ENCODE measurements at regions of chr2 and their contacts with region 1.

Region 1: GRCh38 chr2:130342533-130343275 is at the start of gene IMP4:
- DNase-seq: peak; percentile 99
- H3K4me3 Mint-ChIP-seq: peak within 1 kb of the TSS; percentile 98
- H3K27ac Mint-ChIP-seq: peak within 1 kb of the TSS; percentile 98
- H3K4me1 Mint-ChIP-seq: peaks cover 12% of the 10 kb centered on the region
- H3K27me3 Mint-ChIP-seq: no peaks in the 10 kb centered on the region
- CTCF ChIP-seq: no peak
- total RNA-seq, gene IMP4: 99.8 and 144 TPM in 2 replicates

Region 2: DNA sequence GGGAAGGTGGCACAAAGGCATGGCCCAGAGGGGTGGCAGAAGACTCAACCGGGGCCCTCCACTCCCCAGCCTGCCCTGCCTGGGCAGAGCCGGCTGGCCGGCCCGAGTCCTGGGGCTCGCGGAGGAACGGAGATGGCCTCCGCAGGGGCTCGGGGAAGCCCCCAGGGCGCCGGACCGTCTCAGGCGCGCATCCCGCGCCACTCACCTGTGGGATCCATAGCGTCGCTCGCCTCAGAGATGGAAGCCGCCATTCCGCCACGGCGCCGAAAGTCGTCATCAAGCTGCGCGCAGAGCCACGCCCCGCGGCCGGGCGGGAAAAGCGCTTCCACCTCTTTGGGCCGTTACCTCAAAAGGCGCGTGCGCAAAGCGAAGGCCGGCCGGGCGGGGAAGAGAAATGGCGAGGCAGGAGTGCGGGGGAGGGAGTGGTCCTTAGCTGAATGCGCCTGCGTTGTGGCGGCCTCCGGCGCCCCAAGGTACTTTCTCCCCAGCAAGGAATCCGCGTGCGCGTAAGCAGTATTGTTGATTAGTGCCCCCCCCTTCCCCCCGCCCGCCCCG is 161.3 kb before region 1 on chr2 and contains the start of gene SMPD4:
- CTCF ChIA-PET with region 1: interaction called, 90 read pairs
- POLR2A ChIA-PET with region 1: interaction called, 61 read pairs
- intact Hi-C with region 1: no loop called
- DNase-seq: peak; percentile 96
- H3K4me3 Mint-ChIP-seq: peak within 1 kb of the TSS; percentile 85
- H3K27ac Mint-ChIP-seq: peak within 1 kb of the TSS; percentile 92
- H3K4me1 Mint-ChIP-seq: peaks cover 5% of the 10 kb centered on the region
- H3K27me3 Mint-ChIP-seq: no peaks in the 10 kb centered on the region
- CTCF ChIP-seq: no peak
- total RNA-seq, gene SMPD4: 40.2 and 41.1 TPM in 2 replicates

Region 3: DNA sequence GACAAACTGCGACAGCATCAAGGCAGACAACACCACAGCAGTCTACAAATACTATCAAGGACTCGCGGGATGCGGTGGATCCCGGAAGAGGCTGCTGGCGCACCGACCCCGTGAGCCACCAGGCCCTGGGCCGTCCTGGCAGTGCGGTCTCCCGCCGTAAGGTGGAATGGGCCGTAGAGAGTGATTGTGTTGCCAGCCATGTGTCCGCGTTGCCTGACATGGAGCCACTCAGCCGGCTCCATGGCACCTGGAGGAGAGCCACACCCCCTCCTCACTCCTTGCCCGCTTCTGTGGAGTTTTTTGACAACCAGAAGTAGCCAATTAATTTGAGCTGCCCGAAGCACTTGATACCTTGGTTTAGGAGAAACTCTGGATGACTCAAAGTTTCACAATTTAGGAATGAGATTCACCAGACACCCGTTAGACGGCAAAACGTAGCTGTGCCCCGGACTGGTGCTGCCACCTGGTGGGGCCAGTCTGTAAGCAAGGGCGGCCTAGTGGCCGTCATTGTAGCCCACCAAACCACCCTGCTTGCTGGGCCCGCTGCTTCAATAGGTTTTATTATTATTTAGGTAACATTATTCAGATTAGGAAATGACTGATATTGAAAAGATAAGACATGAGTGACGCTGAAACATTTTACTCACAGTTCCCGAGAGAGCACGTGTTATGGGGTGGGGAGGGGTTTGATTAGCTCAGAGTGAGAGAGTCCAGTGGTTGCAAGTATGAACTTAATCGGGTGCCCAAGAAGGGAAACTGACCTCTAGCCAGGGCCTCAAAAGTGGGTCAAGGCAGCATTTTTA is 10.2 kb before region 1 on chr2:
- CTCF ChIA-PET with region 1: interaction called, 37 read pairs
- POLR2A ChIA-PET with region 1: interaction called, 39 read pairs
- intact Hi-C with region 1: no loop called
- DNase-seq: peak; percentile 84
- H3K4me3 Mint-ChIP-seq: no peak overlapping the region
- H3K27ac Mint-ChIP-seq: no peak overlapping the region
- H3K4me1 Mint-ChIP-seq: peaks cover 15% of the 10 kb centered on the region
- H3K27me3 Mint-ChIP-seq: no peaks in the 10 kb centered on the region
- CTCF ChIP-seq: peak; percentile 95

Region 4: GRCh38 chr2:130355578-130356431 is 13.1 kb after region 1 on chr2 and contains the start of gene PTPN18:
- CTCF ChIA-PET with region 1: interaction called, 6 read pairs
- POLR2A ChIA-PET with region 1: interaction called, 53 read pairs
- intact Hi-C with region 1: no loop called
- DNase-seq: peak; percentile 85
- H3K4me3 Mint-ChIP-seq: peak within 1 kb of the TSS; percentile 78
- H3K27ac Mint-ChIP-seq: peak within 1 kb of the TSS; percentile 12
- H3K4me1 Mint-ChIP-seq: peaks cover 17% of the 10 kb centered on the region
- H3K27me3 Mint-ChIP-seq: no peaks in the 10 kb centered on the region
- CTCF ChIP-seq: peak; percentile 30
- total RNA-seq, gene PTPN18: 34.4 and 43.1 TPM in 2 replicates

Region 5: GRCh38 chr2:130372055-130372832 is 29.5 kb after region 1 on chr2:
- CTCF ChIA-PET with region 1: interaction called, 8 read pairs
- POLR2A ChIA-PET with region 1: interaction called, 14 read pairs
- intact Hi-C with region 1: no loop called
- DNase-seq: peak; percentile 88
- H3K4me3 Mint-ChIP-seq: peak overlapping the region; percentile 89
- H3K27ac Mint-ChIP-seq: peak overlapping the region; percentile 83
- H3K4me1 Mint-ChIP-seq: peaks cover 28% of the 10 kb centered on the region
- H3K27me3 Mint-ChIP-seq: no peaks in the 10 kb centered on the region
- CTCF ChIP-seq: peak; percentile 88

Region 6: DNA sequence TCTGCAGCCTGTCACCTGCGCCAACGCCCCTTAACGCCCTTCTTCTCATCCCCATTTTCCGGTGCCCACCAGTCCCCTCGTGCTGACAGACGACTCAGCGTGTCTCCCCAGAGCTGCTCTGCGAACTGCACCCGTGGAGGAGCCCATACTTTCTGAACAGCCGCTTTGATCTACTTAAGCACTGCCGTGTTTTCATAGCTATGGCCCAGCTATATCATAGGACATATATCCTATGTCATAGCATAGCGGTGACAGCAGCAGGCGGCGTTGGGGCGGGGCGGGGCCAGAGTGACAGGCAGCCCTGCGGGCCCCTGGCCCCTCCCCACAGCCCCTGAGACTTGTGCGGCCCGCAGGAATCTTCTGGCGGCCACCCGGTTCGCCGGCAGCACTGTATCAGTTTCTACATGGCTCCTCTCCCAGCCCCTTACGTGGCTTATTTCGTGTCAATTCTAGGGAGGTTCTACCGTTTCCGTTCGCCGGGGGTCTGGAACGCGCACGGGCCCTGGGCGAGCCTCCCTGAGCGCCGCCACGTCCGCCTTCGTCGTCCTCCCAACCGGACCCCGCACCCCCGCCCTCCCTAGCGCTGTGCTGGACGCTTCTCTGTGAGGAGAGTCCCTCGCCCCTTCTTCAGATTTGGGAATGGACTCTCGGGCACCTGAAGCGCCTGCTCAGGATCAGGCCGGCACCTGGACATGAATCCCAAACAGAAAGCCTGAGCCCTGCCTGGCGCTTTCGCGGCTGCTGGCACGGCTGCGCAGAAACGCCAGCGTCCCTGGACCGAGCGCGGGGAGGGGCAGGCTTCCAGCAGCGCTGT is 48.6 kb after region 1 on chr2:
- CTCF ChIA-PET with region 1: no interaction called
- POLR2A ChIA-PET with region 1: interaction called, 11 read pairs
- intact Hi-C with region 1: no loop called
- DNase-seq: peak; percentile 64
- H3K4me3 Mint-ChIP-seq: peak overlapping the region; percentile 73
- H3K27ac Mint-ChIP-seq: no peak overlapping the region
- H3K4me1 Mint-ChIP-seq: peaks cover 13% of the 10 kb centered on the region
- H3K27me3 Mint-ChIP-seq: peaks cover 6% of the 10 kb centered on the region
- CTCF ChIP-seq: no peak

Measured in MCF 10A (cell line).